CD4-positive, alpha-beta memory T cell (primary cell): ENCODE measurements at regions of chr2 and their contacts with region 1.

Region 1: DNA sequence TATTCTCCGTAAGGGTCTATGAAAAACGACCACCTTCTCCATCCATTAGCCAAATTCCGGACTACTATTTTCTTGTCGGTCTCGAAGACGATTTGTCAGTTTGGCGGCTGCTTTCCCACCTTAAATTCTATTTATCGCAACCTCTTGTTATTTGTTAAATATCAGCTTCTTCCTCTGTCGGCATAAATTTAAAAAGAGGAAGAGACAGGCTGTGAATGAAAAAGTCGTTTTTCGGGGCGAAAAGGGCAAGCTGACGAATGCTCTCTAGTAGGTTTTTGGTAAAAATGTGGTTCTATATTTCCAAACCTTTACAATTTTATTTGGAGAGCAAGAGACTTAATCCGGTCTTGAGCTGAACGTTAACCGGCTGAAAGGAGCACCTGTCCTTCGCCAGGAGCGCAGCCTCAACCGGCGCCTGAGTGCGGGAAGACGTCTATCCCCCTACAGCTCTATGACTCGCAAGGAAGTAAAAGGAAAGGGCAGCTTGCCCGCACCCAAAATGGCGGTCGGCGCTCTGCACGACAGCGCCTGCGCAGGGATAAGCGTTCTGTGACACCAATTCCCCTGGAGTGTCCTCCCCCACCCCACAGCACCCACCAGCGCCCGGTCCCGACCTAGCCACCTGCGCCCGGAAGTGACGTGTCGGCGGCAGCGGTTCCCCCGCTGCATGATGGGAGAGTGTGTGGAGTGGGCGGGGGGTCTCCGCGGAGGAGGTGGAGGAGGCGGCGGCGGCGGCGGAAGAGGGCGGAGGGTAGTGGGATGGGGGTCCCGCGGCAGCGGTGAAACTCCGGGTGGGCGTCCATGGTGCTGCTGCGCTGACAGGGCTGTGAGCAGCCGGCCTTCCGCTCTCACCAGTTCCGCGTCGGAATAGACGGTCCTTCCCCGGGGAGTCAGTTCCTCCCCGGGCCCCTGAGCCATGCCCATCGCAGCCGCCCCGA is at the start of gene AFTPH:
- DNase-seq: peak; percentile 98 to 100 (median 99)
- H3K4me3 ChIP-seq: peak within 1 kb of the TSS; percentile 94 to 95
- H3K4me3 Mint-ChIP-seq: peak within 1 kb of the TSS; percentile 99 to 100 (median 99)
- H3K27ac ChIP-seq: peak within 1 kb of the TSS; percentile 96
- H3K27ac Mint-ChIP-seq: peak within 1 kb of the TSS; percentile 97 to 99 (median 99)
- H3K4me1 ChIP-seq: peaks cover 40% of the 10 kb centered on the region
- H3K4me1 Mint-ChIP-seq: peaks cover 32 to 50% (median 39%) of the 10 kb centered on the region in 4 donors
- H3K27me3 ChIP-seq: no peaks in the 10 kb centered on the region
- H3K27me3 Mint-ChIP-seq: peaks cover 0 to 2% of the 10 kb centered on the region in 2 donors
- total RNA-seq, gene AFTPH: 48.3 to 48.9 TPM

Region 2: DNA sequence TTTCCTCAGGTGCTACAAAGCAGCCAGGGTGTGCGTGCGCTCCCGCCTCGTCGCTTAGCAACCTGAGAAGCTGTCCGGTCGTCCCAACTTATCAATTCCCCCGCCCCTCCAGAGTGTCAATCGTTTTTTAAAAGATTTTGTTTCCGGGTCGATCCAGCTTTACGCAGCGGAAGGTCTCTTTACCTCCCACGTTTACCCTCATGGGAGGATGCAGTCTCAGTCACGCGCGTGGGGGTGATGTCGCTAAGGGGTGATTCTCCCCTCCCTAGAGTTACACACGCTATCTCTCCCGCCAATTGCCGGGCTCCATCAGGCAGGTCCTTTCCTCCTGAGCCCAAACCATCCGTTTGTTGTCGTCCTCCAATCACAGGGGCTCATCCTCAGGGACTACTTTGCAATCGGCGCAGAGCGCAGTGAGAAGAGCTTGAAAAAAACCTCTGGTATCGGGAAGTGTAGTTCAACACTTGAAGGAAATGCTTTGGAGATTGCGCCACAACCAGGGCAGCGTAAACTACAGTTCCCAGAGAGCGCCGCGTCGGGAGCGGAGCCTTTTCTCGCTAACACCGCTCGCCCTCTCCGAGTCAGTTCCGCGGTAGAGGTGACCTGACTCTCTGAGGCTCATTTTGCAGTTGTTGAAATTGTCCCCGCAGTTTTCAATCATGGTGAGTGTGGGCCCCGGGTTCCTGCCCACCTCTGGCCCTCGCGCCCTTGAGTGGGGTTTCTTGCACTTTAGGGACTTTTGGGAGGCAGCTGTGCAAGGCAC is 935.4 kb before region 1 on chr2 and contains the starts of genes MDH1 and WDPCP:
- CTCF ChIA-PET with region 1: no interaction called
- POLR2A ChIA-PET with region 1: interaction called, 12 read pairs
- intact Hi-C with region 1: loop called (anchors 1 kb)
- DNase-seq: peak; percentile 93 to 99 (median 97)
- H3K4me3 ChIP-seq: peak within 1 kb of the TSS; percentile 78 to 96
- H3K4me3 Mint-ChIP-seq: peak within 1 kb of the TSS; percentile 89 to 96 (median 95)
- H3K27ac ChIP-seq: peak within 1 kb of the TSS; percentile 82
- H3K27ac Mint-ChIP-seq: peak within 1 kb of the TSS; percentile 92 to 99 (median 98)
- H3K4me1 ChIP-seq: peaks cover 32% of the 10 kb centered on the region
- H3K4me1 Mint-ChIP-seq: peaks cover 20 to 54% (median 43%) of the 10 kb centered on the region in 4 donors
- H3K27me3 ChIP-seq: no peaks in the 10 kb centered on the region
- H3K27me3 Mint-ChIP-seq: no peaks in the 10 kb centered on the region
- total RNA-seq, gene MDH1: 93.8 to 102 TPM
- total RNA-seq, gene WDPCP: 10.5 to 13.2 TPM

Region 3: GRCh38 chr2:64391424-64391823 is 132.5 kb before region 1 on chr2:
- CTCF ChIA-PET with region 1: no interaction called
- POLR2A ChIA-PET with region 1: no interaction called
- intact Hi-C with region 1: no loop called
- DNase-seq: no peak
- H3K4me3 ChIP-seq: no peak overlapping the region
- H3K4me3 Mint-ChIP-seq: no peak overlapping the region
- H3K27ac ChIP-seq: no peak overlapping the region
- H3K27ac Mint-ChIP-seq: no peak overlapping the region
- H3K4me1 ChIP-seq: no peaks in the 10 kb centered on the region
- H3K4me1 Mint-ChIP-seq: no peaks in the 10 kb centered on the region
- H3K27me3 ChIP-seq: no peaks in the 10 kb centered on the region
- H3K27me3 Mint-ChIP-seq: peaks cover 1 to 4% of the 10 kb centered on the region in 2 donors

Region 4: GRCh38 chr2:64554117-64554516 is 30.2 kb after region 1 on chr2:
- CTCF ChIA-PET with region 1: interaction called, 128 read pairs
- POLR2A ChIA-PET with region 1: interaction called, 42 read pairs
- intact Hi-C with region 1: no loop called
- DNase-seq: no peak
- H3K4me3 ChIP-seq: no peak overlapping the region
- H3K4me3 Mint-ChIP-seq: no peak overlapping the region
- H3K27ac ChIP-seq: no peak overlapping the region
- H3K27ac Mint-ChIP-seq: no peak overlapping the region
- H3K4me1 ChIP-seq: no peaks in the 10 kb centered on the region
- H3K4me1 Mint-ChIP-seq: peaks cover 0 to 31% (median 8%) of the 10 kb centered on the region in 4 donors
- H3K27me3 ChIP-seq: no peaks in the 10 kb centered on the region
- H3K27me3 Mint-ChIP-seq: no peaks in the 10 kb centered on the region

Region 5: DNA sequence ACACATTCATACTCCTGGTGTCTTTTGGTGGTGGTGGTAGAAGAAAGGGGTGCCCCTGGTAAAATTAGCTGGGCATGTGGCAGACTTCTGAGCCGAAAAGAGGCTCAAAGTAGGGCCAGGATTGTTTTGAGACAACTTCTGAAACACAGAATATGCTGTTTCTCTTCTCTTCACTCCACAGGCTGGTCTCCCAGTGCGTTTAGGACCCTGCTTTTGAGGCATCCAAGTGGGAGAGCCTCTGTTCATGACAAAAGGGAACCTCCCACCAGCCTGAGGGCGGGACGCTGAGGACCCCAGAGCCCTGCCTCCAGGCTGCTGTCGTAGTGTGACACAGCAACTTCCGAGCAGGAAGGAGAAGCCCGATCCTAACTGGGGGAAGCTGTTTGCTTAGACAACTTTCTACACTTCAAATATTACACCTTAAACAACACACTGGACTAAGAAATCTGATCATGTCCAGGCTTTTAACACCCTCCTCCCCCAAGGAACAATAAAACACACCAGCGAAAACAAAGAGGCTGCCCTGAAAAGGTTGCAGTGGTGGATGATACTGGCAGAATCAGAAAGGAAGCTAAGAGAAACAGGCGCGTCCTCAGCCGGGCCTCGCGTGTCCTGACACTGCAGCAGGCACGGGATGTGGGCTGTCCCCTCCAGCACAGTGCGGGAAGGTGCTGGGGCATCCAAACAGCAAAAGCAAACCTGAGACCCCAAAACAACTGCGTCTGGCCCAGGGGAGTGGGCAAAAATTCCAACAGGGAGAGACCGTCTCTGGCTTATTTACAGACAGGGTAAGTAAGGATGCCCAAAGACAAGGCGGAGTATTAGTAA is 120.5 kb after region 1 on chr2:
- CTCF ChIA-PET with region 1: interaction called, 39 read pairs
- POLR2A ChIA-PET with region 1: interaction called, 4 read pairs
- intact Hi-C with region 1: no loop called
- DNase-seq: peak in 2 of 5 donors; percentile 35 to 38
- H3K4me3 ChIP-seq: no peak overlapping the region
- H3K4me3 Mint-ChIP-seq: peak overlapping the region; percentile 82 to 92 (median 86)
- H3K27ac ChIP-seq: no peak overlapping the region
- H3K27ac Mint-ChIP-seq: peak overlapping the region; percentile 7 to 87 (median 83)
- H3K4me1 ChIP-seq: peaks cover 52% of the 10 kb centered on the region
- H3K4me1 Mint-ChIP-seq: peaks cover 28 to 70% (median 43%) of the 10 kb centered on the region in 4 donors
- H3K27me3 ChIP-seq: no peaks in the 10 kb centered on the region
- H3K27me3 Mint-ChIP-seq: no peaks in the 10 kb centered on the region

Region 6: GRCh38 chr2:64831134-64831976 is 307.4 kb after region 1 on chr2:
- CTCF ChIA-PET with region 1: interaction called, 14 read pairs
- POLR2A ChIA-PET with region 1: interaction called, 4 read pairs
- intact Hi-C with region 1: loop called (anchors 1 kb)
- DNase-seq: peak; percentile 74 to 90 (median 75)
- H3K4me3 ChIP-seq: peak overlapping the region; percentile 22 to 48
- H3K4me3 Mint-ChIP-seq: peak overlapping the region; percentile 19 to 78 (median 66)
- H3K27ac ChIP-seq: no peak overlapping the region
- H3K27ac Mint-ChIP-seq: peak overlapping the region in 5 of 7 donors; percentile 31 to 72 (median 45)
- H3K4me1 ChIP-seq: peaks cover 10% of the 10 kb centered on the region
- H3K4me1 Mint-ChIP-seq: peaks cover 2 to 12% (median 8%) of the 10 kb centered on the region in 4 donors
- H3K27me3 ChIP-seq: no peaks in the 10 kb centered on the region
- H3K27me3 Mint-ChIP-seq: peaks cover 2 to 3% of the 10 kb centered on the region in 2 donors

Region 7: DNA sequence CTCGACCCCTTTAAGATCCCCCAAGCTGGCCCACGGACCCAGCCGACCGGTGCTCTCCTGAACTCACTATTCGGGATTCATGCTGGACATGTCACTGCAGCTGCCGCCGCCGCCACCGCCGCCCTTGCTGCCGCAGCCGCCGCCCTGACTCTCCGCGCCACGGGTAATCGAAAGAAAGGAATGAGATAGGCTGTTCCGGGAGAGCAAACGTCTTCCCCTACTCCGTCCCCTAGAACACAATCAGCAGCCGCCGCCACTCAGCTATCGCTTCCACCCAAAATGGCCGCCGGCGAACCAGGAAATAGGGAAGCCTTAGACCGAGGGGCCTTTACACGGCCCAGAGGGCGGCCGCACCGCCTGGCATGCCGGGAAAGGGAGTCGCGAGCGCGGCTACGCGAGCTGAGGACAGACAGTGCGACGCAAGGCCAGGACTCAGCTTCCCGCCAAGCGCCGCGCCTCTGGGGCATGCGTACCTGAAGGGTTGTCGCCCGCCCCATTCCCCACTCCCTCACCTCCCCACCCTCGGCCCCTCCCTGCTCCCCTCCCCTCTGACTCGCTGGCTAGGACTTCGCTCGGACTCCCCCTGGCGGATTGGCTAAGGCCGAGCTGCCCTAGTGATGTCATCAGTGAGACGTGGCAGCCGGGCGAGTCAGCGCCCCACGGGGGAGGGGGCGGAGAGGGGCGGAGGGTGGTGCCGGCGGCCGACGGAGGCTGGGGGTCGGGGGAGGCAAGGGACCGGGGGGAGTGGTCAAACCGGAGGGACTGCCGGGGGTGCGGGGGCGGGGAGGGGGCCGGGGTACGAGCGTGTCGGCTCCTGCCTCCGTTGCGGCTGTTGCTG is 606.1 kb after region 1 on chr2 and contains the start of gene RAB1A:
- CTCF ChIA-PET with region 1: no interaction called
- POLR2A ChIA-PET with region 1: interaction called, 5 read pairs
- intact Hi-C with region 1: loop called (anchors 1 kb)
- DNase-seq: peak; percentile 95 to 100 (median 99)
- H3K4me3 ChIP-seq: peak within 1 kb of the TSS; percentile 74 to 94
- H3K4me3 Mint-ChIP-seq: peak within 1 kb of the TSS; percentile 97 to 100 (median 99)
- H3K27ac ChIP-seq: peak within 1 kb of the TSS; percentile 97
- H3K27ac Mint-ChIP-seq: peak within 1 kb of the TSS; percentile 94 to 100 (median 99)
- H3K4me1 ChIP-seq: peaks cover 45% of the 10 kb centered on the region
- H3K4me1 Mint-ChIP-seq: peaks cover 20 to 51% (median 28%) of the 10 kb centered on the region in 4 donors
- H3K27me3 ChIP-seq: no peaks in the 10 kb centered on the region
- H3K27me3 Mint-ChIP-seq: no peaks in the 10 kb centered on the region
- total RNA-seq, gene RAB1A: 53.3 to 58.4 TPM